ENCODE measurements at regions of chr3 and their contacts with region 1.

Region 1: GRCh38 chr3:129224984-129225393 is 24.4 kb upstream of the COPG1 start:
- DNase-seq: no peak
- ATAC-seq: peak; percentile 74
- H3K4me3 Mint-ChIP-seq: peak overlapping the region; percentile 73
- H3K27ac Mint-ChIP-seq: peak overlapping the region; percentile 88
- H3K4me1 Mint-ChIP-seq: peaks cover 41% of the 10 kb centered on the region
- H3K27me3 Mint-ChIP-seq: no peaks in the 10 kb centered on the region

Region 2: DNA sequence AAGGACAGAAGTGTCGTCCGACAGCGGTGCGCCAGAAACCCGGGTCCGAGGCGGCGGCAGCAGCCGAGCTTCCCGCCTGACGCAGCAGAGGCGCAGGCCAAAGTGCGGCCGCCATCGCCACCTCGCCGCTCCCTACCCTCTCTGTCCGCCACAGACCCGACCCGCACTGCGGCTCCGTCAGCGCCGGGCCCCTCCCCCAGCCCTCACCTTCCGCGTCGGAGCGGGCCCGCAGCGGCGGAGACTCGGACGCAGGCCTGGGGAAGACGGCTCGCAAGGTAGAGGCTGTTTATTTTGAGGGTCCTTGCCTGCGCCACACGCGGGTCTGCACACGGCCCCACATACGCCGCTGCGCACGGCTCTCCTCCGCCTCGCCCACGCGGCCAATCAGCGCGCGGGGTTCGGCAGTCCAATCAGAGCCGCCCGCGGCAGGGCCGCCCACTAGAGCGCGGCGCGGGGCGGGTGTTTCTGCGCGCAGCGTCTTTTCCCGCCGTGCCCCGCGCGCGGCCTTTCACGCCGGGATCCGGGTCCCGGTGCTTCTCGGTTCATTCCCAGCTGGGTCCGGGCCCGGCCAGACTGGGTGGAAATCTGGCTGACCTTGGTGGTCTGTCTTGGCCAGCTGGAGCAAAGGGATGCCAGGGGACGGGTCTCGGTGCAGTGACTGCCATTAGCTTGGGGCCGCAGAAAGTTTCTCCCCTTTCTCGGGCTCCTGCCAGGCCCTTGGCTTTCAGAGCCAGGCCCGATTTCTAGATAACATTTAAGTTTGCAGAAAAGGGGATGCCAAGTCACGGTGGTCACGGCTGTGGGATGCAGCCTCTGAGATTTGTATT is 41.2 kb before region 1 on chr3 and contains the start of gene CNBP:
- POLR2A ChIA-PET with region 1: interaction called, 18 read pairs
- DNase-seq: peak; percentile 97
- ATAC-seq: peak; percentile 98
- H3K4me3 Mint-ChIP-seq: peak within 1 kb of the TSS; percentile 92
- H3K27ac Mint-ChIP-seq: peak within 1 kb of the TSS; percentile 98
- H3K4me1 Mint-ChIP-seq: peaks cover 38% of the 10 kb centered on the region
- H3K27me3 Mint-ChIP-seq: no peaks in the 10 kb centered on the region
- total RNA-seq, gene CNBP: 309 to 312 TPM

Region 3: GRCh38 chr3:129204473-129204872 is 20.5 kb before region 1 on chr3:
- POLR2A ChIA-PET with region 1: interaction called, 11 read pairs
- DNase-seq: no peak
- ATAC-seq: no peak
- H3K4me3 Mint-ChIP-seq: no peak overlapping the region
- H3K27ac Mint-ChIP-seq: no peak overlapping the region
- H3K4me1 Mint-ChIP-seq: peaks cover 2% of the 10 kb centered on the region
- H3K27me3 Mint-ChIP-seq: no peaks in the 10 kb centered on the region

Region 4: GRCh38 chr3:129238945-129239706 is 14.1 kb after region 1 on chr3:
- POLR2A ChIA-PET with region 1: interaction called, 12 read pairs
- DNase-seq: peak; percentile 56
- ATAC-seq: peak; percentile 80
- H3K4me3 Mint-ChIP-seq: peak overlapping the region; percentile 67
- H3K27ac Mint-ChIP-seq: peak overlapping the region; percentile 93
- H3K4me1 Mint-ChIP-seq: peaks cover 32% of the 10 kb centered on the region
- H3K27me3 Mint-ChIP-seq: no peaks in the 10 kb centered on the region

Measured in activated naive CD8-positive, alpha-beta T cell treated with anti-CD3 and anti-CD28 coated beads, Interleukin-2, amount 10 ng/mL, durations not matched to agents 7 days and 5 days (primary cell).